Sigmoid colon (tissue), 7 donors: ENCODE measurements at regions of chr2 and their contacts with region 1.

Region 1: GRCh38 chr2:97697252-97698235 is 15.8 kb upstream of the ZAP70 start:
- DNase-seq: peak; percentile 94
- H3K4me3 ChIP-seq: no peak overlapping the region
- H3K27ac ChIP-seq: no peak overlapping the region
- H3K4me1 ChIP-seq: peaks cover 0 to 4% (median 0%) of the 10 kb centered on the region in 4 donors
- H3K27me3 ChIP-seq: no peaks in the 10 kb centered on the region
- CTCF ChIP-seq: peak; percentile 86 to 96 (median 95)
- EP300 ChIP-seq: no peak
- POLR2A ChIP-seq: no peak

Region 2: GRCh38 chr2:97645695-97646629 is 51.6 kb before region 1 on chr2 and contains the start of gene COX5B:
- intact Hi-C with region 1: loop called (anchors 5 kb)
- DNase-seq: peak; percentile 100
- H3K4me3 ChIP-seq: peak within 1 kb of the TSS; percentile 63 to 96 (median 82)
- H3K27ac ChIP-seq: peak within 1 kb of the TSS; percentile 89 to 95 (median 91)
- H3K4me1 ChIP-seq: peaks cover 0 to 21% (median 18%) of the 10 kb centered on the region in 4 donors
- H3K27me3 ChIP-seq: no peaks in the 10 kb centered on the region
- CTCF ChIP-seq: no peak
- EP300 ChIP-seq: peak in 1 of 4 donors; percentile 66
- POLR2A ChIP-seq: peak; percentile 82 to 87
- total RNA-seq, gene COX5B: 358 to 796 (median 595) TPM

Region 3: DNA sequence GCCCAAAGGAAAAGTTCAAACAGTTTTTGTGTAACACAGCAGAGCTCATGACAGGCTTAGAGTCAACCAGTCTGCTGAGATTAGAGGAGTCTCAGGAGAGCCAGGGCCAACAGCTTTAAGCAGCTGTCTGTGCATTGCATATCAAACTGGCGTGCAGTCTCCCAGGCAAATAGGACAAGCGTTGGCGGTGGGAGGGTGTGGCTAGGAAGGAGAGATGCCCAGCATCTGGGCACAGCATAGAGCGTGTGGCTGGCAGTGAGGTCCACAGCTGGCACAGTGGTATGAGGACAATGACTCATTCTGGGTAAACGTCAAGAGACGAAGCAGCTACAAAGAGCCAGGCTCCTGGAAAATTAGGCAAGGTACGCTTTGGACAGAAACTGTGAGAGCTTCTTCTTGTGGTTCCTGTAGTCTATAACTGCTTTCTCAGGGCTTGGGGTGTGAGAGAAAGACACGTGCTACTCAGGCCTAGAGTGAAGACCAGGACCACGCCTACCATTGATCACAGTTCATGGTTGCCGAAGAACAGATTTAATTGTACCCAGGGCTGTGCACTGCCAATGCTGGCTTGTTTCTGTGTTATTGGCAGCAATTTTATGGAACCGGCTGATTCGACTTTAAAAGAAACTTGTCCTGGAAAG is 30.7 kb after region 1 on chr2:
- intact Hi-C with region 1: no loop called
- DNase-seq: peak; percentile 62
- H3K4me3 ChIP-seq: no peak overlapping the region
- H3K27ac ChIP-seq: peak overlapping the region in 1 of 4 donors; percentile 14
- H3K4me1 ChIP-seq: no peaks in the 10 kb centered on the region
- H3K27me3 ChIP-seq: peaks cover 0 to 16% (median 10%) of the 10 kb centered on the region in 3 donors
- CTCF ChIP-seq: no peak
- EP300 ChIP-seq: no peak
- POLR2A ChIP-seq: no peak